ENCODE measurements at regions of chr11 and their contacts with region 1.

Region 1: DNA sequence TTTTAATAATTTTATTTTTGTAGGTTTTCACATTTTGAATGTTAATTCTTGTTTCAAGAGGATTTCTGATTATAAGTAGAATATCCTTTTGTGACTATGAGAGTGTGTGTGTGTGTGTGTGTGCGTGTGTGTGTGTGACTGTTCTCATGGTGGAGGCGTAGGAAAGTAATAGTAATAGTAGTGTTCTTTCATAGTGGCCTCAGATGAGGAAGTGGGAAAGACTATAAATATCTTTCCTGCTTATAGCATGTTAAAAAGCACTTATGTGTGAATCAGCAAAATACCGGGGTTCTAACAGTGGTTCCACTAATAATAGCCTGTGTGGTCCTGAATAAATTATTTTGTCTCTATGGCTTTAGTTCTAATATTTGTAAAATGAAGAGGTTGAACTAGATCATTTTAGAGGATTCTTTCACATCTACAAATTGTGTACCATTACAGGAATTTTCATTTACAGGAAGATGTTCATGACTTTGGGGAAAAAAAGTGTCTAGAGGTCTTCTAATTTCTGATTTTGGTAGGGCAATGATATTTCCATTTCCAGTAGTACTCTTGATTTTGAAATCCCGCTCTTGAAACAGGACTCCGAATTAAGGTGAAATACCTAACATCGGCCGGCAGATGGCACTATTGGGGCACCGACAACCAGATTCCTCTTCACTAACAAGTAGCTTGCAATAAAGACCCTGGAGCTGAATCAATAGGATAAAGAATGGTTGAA is 29.9 kb upstream of the OR10G7 start:
- H3K4me3 ChIP-seq: no peak overlapping the region
- H3K27ac ChIP-seq: no peak overlapping the region
- H3K4me1 ChIP-seq: no peaks in the 10 kb centered on the region
- CTCF ChIP-seq: no peak

Region 2: DNA sequence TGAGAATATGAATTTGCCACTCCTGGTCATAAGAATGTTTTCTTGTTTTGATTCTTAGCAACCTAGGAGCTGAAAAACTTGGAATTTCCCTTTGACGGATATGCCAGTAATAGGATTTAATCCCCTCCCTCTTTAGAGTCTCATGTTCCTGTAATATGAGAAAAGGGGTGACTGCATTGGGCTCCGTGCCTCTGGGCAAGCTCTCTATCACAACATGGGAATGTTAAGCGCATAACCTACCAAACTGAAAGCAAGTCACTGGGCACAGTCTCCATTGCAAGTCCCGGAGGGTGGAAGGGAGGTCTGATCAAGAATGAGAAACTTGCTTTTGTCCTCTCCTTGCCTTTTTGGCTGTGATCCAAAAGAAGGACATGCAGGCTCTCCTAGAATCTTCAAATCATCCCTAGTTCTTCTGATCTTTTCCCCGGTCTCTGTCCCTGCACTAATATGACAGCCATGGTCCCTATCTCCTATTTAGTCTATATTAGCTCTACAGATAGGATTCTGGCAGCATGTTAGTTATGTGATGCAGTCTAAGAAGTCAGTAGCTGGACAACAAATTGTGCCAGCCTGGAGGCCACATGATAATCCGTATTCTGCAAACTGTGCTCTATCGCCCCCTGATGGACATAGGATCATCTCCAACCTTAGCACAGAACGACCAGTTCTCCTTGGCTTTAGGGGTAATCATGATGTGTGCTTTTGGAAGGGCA is 123.8 kb after region 1 on chr11:
- CTCF ChIA-PET with region 1: interaction called, 57 read pairs
- POLR2A ChIA-PET with region 1: no interaction called
- H3K4me3 ChIP-seq: no peak overlapping the region
- H3K27ac ChIP-seq: no peak overlapping the region
- H3K4me1 ChIP-seq: no peaks in the 10 kb centered on the region
- CTCF ChIP-seq: no peak

Region 3: GRCh38 chr11:124225471-124225870 is 154.4 kb after region 1 on chr11:
- CTCF ChIA-PET with region 1: no interaction called
- POLR2A ChIA-PET with region 1: no interaction called
- H3K4me3 ChIP-seq: no peak overlapping the region
- H3K27ac ChIP-seq: no peak overlapping the region
- H3K4me1 ChIP-seq: no peaks in the 10 kb centered on the region
- CTCF ChIP-seq: no peak

Measured in HEK293 (cell line).